Thyroid gland (tissue), 4 donors: ENCODE measurements at regions of chr19 and their contacts with region 1.

Region 1: DNA sequence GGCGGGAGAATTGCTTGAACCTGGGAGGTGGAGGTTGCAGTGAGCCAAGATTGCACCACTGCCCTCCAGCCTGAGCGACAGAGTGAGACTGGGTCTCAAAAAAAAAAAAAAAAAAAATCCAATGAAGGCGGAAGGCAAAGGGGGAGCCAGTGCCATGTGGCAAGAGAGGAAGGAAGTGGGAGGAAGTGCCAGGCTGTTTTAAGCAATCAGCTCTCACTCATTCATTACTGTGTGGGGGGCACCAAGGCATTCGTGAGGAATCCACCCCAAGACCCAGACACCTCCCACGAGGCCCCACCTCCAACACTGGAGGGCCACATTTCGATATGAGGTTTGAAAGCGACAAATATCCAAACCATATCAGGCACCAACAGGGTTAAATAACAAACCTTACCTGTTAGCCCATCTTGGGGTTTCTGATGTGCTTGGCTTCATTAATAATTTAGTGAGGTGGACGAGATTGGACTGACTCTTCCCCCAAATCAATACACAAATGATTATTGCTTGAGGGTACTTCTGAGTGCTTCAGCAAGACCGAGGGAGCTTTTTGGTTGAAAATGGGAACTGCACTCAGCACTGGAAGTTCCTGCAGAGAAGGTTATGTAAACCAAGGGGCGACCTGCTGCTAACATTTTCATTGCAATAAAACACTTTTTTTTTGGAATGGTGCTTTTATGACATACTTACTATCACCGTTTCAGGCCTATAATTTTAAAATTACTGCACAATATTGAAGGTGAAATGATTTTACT is 7.5 kb upstream of the LRP3 start:
- DNase-seq: no peak
- H3K4me3 ChIP-seq: no peak overlapping the region
- H3K27ac ChIP-seq: peak overlapping the region in 1 of 3 donors; percentile 24
- H3K4me1 ChIP-seq: peaks cover 14 to 18% of the 10 kb centered on the region in 2 donors
- H3K27me3 ChIP-seq: no peaks in the 10 kb centered on the region
- CTCF ChIP-seq: no peak
- POLR2A ChIP-seq: no peak

Region 2: DNA sequence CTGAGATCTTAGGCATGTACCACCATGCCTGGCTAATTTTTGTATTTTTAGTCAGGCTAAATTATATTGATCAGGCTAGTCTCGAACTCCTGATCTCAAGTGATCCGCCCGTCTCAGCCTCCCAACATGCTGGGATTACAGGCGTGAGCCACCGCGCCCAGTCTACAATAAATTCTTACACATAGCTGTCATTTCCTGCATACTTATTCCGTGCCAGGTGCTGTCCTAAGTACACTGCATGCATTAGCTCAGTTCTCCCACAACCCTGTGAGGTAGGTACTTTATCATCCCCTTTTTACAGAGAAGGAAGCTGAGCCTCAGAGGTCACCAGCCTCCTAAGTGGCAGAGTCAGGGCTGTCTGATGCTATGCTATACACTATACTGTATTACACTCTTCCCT is 114.7 kb before region 1 on chr19:
- intact Hi-C with region 1: no loop called
- DNase-seq: no peak
- H3K4me3 ChIP-seq: no peak overlapping the region
- H3K27ac ChIP-seq: no peak overlapping the region
- H3K4me1 ChIP-seq: no peaks in the 10 kb centered on the region
- H3K27me3 ChIP-seq: no peaks in the 10 kb centered on the region
- CTCF ChIP-seq: no peak
- POLR2A ChIP-seq: no peak

Region 3: GRCh38 chr19:33147538-33147937 is 39.1 kb before region 1 on chr19:
- intact Hi-C with region 1: loop called (anchors 5 kb)
- DNase-seq: no peak
- H3K4me3 ChIP-seq: no peak overlapping the region
- H3K27ac ChIP-seq: no peak overlapping the region
- H3K4me1 ChIP-seq: no peaks in the 10 kb centered on the region
- H3K27me3 ChIP-seq: no peaks in the 10 kb centered on the region
- CTCF ChIP-seq: no peak
- POLR2A ChIP-seq: no peak